B cell (primary cell): ENCODE measurements at regions of chr2 and their contacts with region 1.

Region 1: DNA sequence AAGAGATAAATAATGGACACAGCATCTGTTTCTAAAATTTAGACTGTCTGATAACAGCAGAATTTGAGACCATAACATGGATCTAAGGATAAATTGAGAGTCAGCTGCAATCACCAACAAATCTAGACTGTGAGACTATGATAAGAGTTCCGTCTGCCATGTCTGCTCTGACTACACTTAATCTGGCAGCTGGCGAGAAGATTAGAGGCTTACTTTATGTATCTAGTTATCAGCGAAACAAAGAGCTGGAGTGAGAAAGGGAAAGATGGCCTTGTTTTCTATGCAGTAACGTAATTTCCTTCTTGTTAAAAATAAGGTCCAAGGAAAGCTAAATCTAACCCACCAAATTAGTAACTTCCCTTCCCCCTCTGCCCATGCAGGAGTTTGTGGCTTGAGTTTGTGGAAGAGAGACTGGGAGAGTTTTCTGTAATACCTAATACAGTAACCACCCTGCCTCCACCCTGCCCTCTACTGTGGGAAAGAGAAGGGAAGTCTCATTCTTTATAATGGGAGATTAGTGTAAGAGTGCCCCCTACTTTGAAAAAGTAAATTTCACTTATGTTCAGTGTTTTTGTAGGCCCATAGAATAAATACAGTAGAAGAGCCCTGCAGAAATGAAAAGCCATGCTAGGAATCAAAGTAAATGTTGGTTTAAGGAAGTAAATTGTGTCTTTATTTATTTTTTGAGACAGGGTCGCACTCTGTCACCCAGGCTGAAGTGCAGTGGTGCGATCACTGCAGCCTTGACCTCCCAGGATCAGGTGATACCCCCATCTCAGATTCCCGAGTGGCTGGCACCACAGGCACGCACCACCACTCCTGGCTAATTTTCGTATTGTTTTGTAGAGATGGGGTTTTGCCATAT is 27.5 kb downstream of the EML4 start:
- DNase-seq: peak; percentile 76
- ATAC-seq: peak; percentile 85
- H3K4me3 ChIP-seq: no peak overlapping the region
- H3K4me3 Mint-ChIP-seq: no peak overlapping the region
- H3K27ac ChIP-seq: peak overlapping the region in 1 of 2 donors; percentile 32
- H3K27ac Mint-ChIP-seq: peak overlapping the region; percentile 77
- H3K4me1 ChIP-seq: peaks cover 35 to 46% of the 10 kb centered on the region in 2 donors
- H3K4me1 Mint-ChIP-seq: peaks cover 65% of the 10 kb centered on the region
- H3K27me3 ChIP-seq: no peaks in the 10 kb centered on the region
- H3K27me3 Mint-ChIP-seq: no peaks in the 10 kb centered on the region
- CTCF ChIP-seq: peak; percentile 76

Region 2: DNA sequence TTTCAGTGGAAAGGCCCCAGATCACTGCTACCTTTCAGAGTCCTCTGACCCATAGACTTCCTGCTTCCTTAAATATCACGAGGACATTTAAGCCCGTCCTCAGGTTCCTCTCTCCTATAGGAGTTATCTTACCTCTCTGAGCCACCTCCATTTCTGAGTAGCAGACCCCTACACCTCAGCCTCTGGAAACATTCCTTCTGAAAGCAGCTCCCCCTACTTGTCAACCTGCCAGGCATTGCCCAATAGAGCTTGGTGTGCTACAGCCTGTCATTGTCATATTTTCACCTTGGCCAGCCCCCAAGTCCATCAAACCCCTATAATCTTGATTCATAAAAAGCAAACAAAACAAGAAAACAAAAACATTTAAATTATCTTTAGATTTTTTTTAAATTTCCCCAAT is 1026.9 kb before region 1 on chr2:
- CTCF ChIA-PET with region 1: no interaction called
- POLR2A ChIA-PET with region 1: no interaction called
- intact Hi-C with region 1: no loop called
- DNase-seq: no peak
- ATAC-seq: no peak
- H3K4me3 ChIP-seq: no peak overlapping the region
- H3K4me3 Mint-ChIP-seq: no peak overlapping the region
- H3K27ac ChIP-seq: no peak overlapping the region
- H3K27ac Mint-ChIP-seq: no peak overlapping the region
- H3K4me1 ChIP-seq: no peaks in the 10 kb centered on the region
- H3K4me1 Mint-ChIP-seq: no peaks in the 10 kb centered on the region
- H3K27me3 ChIP-seq: no peaks in the 10 kb centered on the region
- H3K27me3 Mint-ChIP-seq: no peaks in the 10 kb centered on the region
- CTCF ChIP-seq: no peak

Region 3: GRCh38 chr2:41869542-41870264 is 326.9 kb before region 1 on chr2:
- CTCF ChIA-PET with region 1: interaction called, 5 read pairs
- POLR2A ChIA-PET with region 1: no interaction called
- intact Hi-C with region 1: loop called (anchors 10 kb)
- DNase-seq: peak; percentile 77
- ATAC-seq: peak; percentile 64
- H3K4me3 ChIP-seq: no peak overlapping the region
- H3K4me3 Mint-ChIP-seq: no peak overlapping the region
- H3K27ac ChIP-seq: no peak overlapping the region
- H3K27ac Mint-ChIP-seq: no peak overlapping the region
- H3K4me1 ChIP-seq: no peaks in the 10 kb centered on the region
- H3K4me1 Mint-ChIP-seq: no peaks in the 10 kb centered on the region
- H3K27me3 ChIP-seq: peaks cover 0 to 9% (median 0%) of the 10 kb centered on the region in 4 experiments
- H3K27me3 Mint-ChIP-seq: peaks cover 12% of the 10 kb centered on the region
- CTCF ChIP-seq: peak; percentile 90

Region 4: DNA sequence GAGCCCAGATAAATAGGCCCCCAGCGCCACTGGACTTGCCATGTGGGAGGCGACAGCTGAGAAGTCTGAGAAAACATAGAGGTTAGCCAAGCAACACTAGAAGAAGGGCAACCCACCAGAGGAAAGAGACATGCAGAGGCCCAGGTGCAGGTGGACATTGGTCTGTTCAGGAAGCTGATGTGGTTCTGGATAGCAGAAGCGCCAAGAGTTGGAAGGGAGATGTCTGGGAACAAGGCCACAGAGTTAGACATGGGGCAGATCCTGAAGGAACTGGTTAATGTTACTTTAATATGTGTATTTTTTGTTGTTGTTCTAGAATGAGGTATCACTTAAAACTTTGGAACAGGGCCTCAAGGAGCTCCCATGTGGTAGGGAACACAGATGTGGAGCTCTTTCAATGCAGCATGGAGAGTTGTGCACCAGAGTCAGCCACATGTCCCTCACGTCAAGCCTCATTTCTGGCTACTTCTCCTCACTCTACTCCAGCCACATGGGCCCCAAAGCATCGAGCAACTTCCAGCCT is 211.0 kb before region 1 on chr2:
- CTCF ChIA-PET with region 1: no interaction called
- POLR2A ChIA-PET with region 1: no interaction called
- intact Hi-C with region 1: no loop called
- DNase-seq: no peak
- ATAC-seq: no peak
- H3K4me3 ChIP-seq: no peak overlapping the region
- H3K4me3 Mint-ChIP-seq: no peak overlapping the region
- H3K27ac ChIP-seq: no peak overlapping the region
- H3K27ac Mint-ChIP-seq: no peak overlapping the region
- H3K4me1 ChIP-seq: no peaks in the 10 kb centered on the region
- H3K4me1 Mint-ChIP-seq: no peaks in the 10 kb centered on the region
- H3K27me3 ChIP-seq: peaks cover 0 to 4% (median 2%) of the 10 kb centered on the region in 4 experiments
- H3K27me3 Mint-ChIP-seq: peaks cover 42% of the 10 kb centered on the region
- CTCF ChIP-seq: no peak

Region 5: DNA sequence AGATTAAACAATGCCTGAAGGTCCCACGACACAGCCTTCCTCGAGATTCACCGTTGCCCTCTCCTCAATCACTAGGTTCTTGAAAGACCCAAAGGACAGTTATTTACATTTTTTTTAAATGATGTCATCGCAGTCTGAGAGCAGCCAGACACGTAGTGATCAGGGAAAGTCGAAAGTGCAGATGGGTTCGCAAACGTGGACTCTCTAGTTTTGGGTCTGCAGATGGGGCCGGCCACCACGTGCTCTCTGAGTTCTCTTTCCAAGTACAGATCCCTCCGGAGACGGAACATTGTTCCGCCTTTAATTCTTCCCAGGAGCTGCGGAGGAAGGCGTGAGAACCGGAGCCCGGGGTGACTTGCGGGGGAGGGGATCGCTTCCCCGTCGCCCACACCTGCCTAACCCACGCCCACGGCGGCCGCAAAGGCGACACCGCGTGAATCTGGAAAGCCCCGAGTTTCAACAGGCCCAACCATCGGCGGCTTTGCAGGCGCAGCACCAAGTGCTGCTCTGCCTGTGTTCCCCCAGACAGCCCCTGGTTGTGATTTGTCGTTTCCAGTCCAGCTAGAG is 94.5 kb before region 1 on chr2:
- CTCF ChIA-PET with region 1: interaction called, 39 read pairs
- POLR2A ChIA-PET with region 1: interaction called, 4 read pairs
- intact Hi-C with region 1: no loop called
- DNase-seq: peak; percentile 98
- ATAC-seq: peak; percentile 69
- H3K4me3 ChIP-seq: peak overlapping the region; percentile 34 to 70 (median 52)
- H3K4me3 Mint-ChIP-seq: peak overlapping the region; percentile 88
- H3K27ac ChIP-seq: peak overlapping the region; percentile 98 to 99
- H3K27ac Mint-ChIP-seq: no peak overlapping the region
- H3K4me1 ChIP-seq: peaks cover 91 to 97% of the 10 kb centered on the region in 2 donors
- H3K4me1 Mint-ChIP-seq: peaks cover 70% of the 10 kb centered on the region
- H3K27me3 ChIP-seq: no peaks in the 10 kb centered on the region
- H3K27me3 Mint-ChIP-seq: no peaks in the 10 kb centered on the region
- CTCF ChIP-seq: no peak

Region 6: DNA sequence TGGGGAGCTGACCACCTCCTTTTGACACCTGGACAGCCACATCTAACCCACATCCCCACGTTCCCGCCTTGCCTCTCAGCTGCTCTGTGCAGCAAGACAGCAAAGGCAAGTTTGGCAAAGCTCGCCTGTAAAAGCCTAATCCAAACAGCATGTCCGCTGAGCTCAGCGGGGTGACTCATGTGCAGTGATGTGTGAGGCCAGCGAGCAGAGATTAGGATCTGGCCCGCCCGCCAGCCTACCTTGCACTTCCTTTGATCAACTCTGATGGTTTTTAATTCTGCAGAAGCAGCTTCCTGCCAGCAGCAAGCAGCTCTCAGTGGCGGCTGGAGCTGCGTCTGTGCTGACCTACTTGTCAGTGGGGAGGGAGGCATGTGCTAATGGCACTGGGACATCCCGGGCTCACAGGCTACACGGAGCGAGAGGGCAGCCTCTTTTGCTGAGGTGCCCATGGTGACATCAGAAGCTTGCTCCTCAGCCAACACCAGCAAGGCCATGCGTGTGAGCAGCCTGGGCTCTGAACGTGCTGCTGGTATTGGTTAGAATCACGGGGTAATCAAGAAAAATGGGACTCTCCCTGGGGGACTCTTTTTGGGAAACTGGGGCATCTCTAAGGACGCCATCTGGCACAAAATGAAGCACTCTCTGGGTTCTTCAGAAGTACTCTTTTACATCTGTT is 63.5 kb before region 1 on chr2:
- CTCF ChIA-PET with region 1: interaction called, 11 read pairs
- POLR2A ChIA-PET with region 1: no interaction called
- intact Hi-C with region 1: no loop called
- DNase-seq: peak; percentile 89
- ATAC-seq: peak; percentile 90
- H3K4me3 ChIP-seq: peak overlapping the region in 4 of 5 experiments; percentile 2 to 36 (median 15)
- H3K4me3 Mint-ChIP-seq: peak overlapping the region; percentile 81
- H3K27ac ChIP-seq: peak overlapping the region; percentile 71 to 73
- H3K27ac Mint-ChIP-seq: peak overlapping the region; percentile 94
- H3K4me1 ChIP-seq: peaks cover 71% of the 10 kb centered on the region in 2 donors
- H3K4me1 Mint-ChIP-seq: peaks cover 74% of the 10 kb centered on the region
- H3K27me3 ChIP-seq: no peaks in the 10 kb centered on the region
- H3K27me3 Mint-ChIP-seq: no peaks in the 10 kb centered on the region
- CTCF ChIP-seq: no peak

Region 7: DNA sequence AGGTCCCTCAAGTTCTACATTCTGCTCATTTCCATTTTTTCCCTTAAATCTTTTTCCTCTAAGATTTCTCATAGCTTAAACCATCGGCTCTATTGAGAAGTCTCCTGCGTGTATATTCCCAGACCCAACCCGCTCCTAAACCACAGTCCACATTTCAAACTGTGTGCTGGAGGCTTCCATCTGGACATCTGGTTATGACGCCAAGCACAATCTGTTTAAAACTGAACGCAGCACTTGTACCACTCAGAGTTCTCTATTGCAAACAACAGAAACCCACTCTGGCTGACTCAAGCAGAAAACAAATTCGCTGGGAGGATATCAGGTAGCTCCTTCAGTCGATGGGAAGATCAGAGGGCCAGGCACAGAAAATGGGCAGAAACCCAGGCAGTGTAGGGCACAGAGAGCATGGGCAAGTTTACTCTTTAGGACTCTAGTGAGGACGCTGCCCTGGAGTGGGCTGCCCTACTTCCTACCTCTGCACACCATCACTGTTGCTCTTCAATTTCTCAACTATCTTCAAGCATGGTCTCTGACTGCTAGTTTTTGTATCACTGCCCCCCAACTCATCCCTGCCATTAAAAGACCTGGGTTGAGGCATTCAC is 33.1 kb before region 1 on chr2:
- CTCF ChIA-PET with region 1: interaction called, 3 read pairs
- POLR2A ChIA-PET with region 1: no interaction called
- intact Hi-C with region 1: loop called (anchors 5 kb)
- DNase-seq: no peak
- ATAC-seq: no peak
- H3K4me3 ChIP-seq: no peak overlapping the region
- H3K4me3 Mint-ChIP-seq: no peak overlapping the region
- H3K27ac ChIP-seq: no peak overlapping the region
- H3K27ac Mint-ChIP-seq: peak overlapping the region; percentile 33
- H3K4me1 ChIP-seq: peaks cover 7 to 13% of the 10 kb centered on the region in 2 donors
- H3K4me1 Mint-ChIP-seq: peaks cover 34% of the 10 kb centered on the region
- H3K27me3 ChIP-seq: no peaks in the 10 kb centered on the region
- H3K27me3 Mint-ChIP-seq: no peaks in the 10 kb centered on the region
- CTCF ChIP-seq: no peak

Region 8: DNA sequence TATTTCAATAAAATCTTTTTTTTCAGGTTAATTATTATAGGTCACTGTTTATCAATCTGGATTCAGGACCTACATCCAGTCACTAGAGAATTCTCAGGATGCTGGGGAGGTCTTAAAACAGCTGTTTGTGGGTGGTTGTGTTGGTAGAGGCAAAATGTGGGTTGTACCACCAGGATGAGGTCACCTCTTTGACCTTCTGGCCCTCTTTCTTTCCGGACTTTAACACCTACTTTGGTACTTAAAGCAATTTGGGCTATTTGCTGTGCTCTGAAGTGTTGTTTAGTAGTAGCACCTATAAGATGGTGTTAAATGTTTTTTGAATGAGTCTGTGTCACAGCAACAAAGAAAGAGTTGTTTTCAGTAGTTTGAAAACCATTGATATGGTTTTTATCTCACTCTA is 12.9 kb before region 1 on chr2:
- CTCF ChIA-PET with region 1: interaction called, 27 read pairs
- POLR2A ChIA-PET with region 1: interaction called, 4 read pairs
- intact Hi-C with region 1: no loop called
- DNase-seq: no peak
- ATAC-seq: peak; percentile 41
- H3K4me3 ChIP-seq: peak overlapping the region in 1 of 5 experiments; percentile 7
- H3K4me3 Mint-ChIP-seq: peak overlapping the region; percentile 29
- H3K27ac ChIP-seq: peak overlapping the region in 1 of 2 donors; percentile 68
- H3K27ac Mint-ChIP-seq: peak overlapping the region; percentile 63
- H3K4me1 ChIP-seq: peaks cover 34 to 52% of the 10 kb centered on the region in 2 donors
- H3K4me1 Mint-ChIP-seq: peaks cover 67% of the 10 kb centered on the region
- H3K27me3 ChIP-seq: no peaks in the 10 kb centered on the region
- H3K27me3 Mint-ChIP-seq: no peaks in the 10 kb centered on the region
- CTCF ChIP-seq: no peak

Region 9: DNA sequence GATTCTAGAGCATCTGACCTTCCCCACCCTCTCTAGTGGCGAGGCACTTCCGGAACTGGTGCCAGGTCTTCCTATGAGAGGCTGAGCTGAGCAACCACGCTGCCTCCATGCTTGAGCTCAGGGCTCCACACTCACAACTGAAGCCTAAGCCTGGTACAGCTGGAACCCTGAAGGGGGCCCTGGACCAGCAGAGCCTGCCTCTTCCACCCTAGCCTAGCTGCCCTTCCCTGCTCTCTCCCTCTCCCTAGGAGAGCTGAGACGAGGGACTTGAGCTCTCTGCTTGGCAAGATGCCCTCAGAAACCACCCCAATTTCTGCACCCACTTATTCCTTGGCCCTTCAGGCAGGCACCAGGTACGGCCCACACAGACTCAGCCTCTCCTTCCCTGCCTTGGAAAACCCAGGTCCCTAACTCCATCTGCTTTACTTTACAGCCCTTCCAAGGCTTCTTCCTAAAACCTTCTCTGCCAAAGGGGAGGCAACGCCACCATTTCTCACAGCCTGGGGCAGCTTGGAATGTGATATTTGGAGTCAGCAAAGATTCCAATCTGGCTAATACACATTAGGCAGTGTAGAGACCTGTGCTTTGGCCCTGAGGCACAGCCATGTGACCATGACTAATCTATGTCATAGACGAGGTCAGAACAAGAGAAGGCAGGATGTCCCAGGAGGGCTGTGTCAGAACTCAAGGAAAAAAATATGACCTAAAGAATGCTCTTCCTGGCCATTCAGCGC is 145.6 kb after region 1 on chr2:
- CTCF ChIA-PET with region 1: no interaction called
- POLR2A ChIA-PET with region 1: no interaction called
- intact Hi-C with region 1: no loop called
- DNase-seq: no peak
- ATAC-seq: no peak
- H3K4me3 ChIP-seq: no peak overlapping the region
- H3K4me3 Mint-ChIP-seq: no peak overlapping the region
- H3K27ac ChIP-seq: no peak overlapping the region
- H3K27ac Mint-ChIP-seq: peak overlapping the region; percentile 47
- H3K4me1 ChIP-seq: no peaks in the 10 kb centered on the region
- H3K4me1 Mint-ChIP-seq: no peaks in the 10 kb centered on the region
- H3K27me3 ChIP-seq: no peaks in the 10 kb centered on the region
- H3K27me3 Mint-ChIP-seq: no peaks in the 10 kb centered on the region
- CTCF ChIP-seq: no peak